ENCODE measurements at regions of chr21 and their contacts with region 1.

Region 1: GRCh38 chr21:37220981-37221664 is 46.0 kb downstream of the VPS26C start:
- DNase-seq: peak; percentile 98
- ATAC-seq: peak; percentile 84
- H3K4me3 Mint-ChIP-seq: peak overlapping the region; percentile 82
- H3K27ac Mint-ChIP-seq: peak overlapping the region; percentile 97
- H3K4me1 Mint-ChIP-seq: peaks cover 47% of the 10 kb centered on the region
- H3K27me3 Mint-ChIP-seq: no peaks in the 10 kb centered on the region

Region 2: GRCh38 chr21:37159053-37159776 is 61.9 kb before region 1 on chr21:
- CTCF ChIA-PET with region 1: no interaction called
- POLR2A ChIA-PET with region 1: no interaction called
- intact Hi-C with region 1: loop called in 1 of 2 experiments (anchors 2 kb)
- DNase-seq: peak; percentile 73
- ATAC-seq: peak; percentile 96
- H3K4me3 Mint-ChIP-seq: peak overlapping the region; percentile 0
- H3K27ac Mint-ChIP-seq: peak overlapping the region; percentile 88
- H3K4me1 Mint-ChIP-seq: peaks cover 13% of the 10 kb centered on the region
- H3K27me3 Mint-ChIP-seq: no peaks in the 10 kb centered on the region

Region 3: DNA sequence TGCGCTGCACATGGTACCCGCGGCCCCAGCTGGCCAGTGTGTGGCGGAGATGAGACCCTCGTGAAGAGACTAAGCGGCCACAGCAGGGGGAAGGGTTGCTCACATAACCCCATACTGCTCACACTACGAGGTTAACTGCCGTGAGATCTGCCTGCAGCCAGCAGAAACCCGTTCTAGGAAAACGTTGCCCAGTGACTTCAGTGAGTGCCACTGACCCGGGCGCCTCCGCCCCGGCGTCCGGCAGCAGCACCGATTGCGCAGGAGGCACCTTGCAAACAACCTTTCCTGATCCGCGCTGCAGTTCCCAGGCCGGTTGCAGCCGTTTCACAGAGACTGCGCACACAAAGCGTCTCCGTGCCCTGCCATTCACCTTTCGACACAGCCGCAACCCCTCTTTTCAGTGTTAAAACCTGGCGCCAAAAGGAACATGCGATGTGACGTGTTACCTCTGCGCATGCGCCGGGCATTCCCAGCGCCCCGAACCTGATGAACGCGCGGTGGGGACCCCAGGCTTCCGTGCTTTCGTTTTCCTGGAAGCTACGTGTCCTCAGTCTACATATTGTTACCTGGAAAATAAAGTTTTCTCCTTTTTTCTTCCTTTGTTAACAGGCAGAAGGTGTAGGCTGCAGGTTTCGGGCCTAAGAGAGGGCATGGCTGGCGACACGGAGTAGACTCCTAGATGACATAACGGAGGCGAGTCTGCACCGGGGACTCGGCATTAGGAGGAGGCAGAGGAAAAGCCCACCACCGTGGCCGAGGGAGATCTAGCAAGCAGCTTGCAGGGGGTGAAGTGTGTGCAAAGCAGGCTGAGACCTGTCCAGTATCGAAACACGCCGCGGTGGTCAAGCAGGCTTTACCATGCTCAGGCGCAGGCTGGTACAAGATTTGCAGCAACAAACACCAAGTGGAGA is 37.1 kb after region 1 on chr21:
- CTCF ChIA-PET with region 1: no interaction called
- POLR2A ChIA-PET with region 1: interaction called, 5 read pairs
- intact Hi-C with region 1: loop called (anchors 2 kb)
- DNase-seq: peak; percentile 92
- ATAC-seq: peak; percentile 87
- H3K4me3 Mint-ChIP-seq: peak overlapping the region; percentile 79
- H3K27ac Mint-ChIP-seq: peak overlapping the region; percentile 93
- H3K4me1 Mint-ChIP-seq: peaks cover 31% of the 10 kb centered on the region
- H3K27me3 Mint-ChIP-seq: no peaks in the 10 kb centered on the region

Region 4: DNA sequence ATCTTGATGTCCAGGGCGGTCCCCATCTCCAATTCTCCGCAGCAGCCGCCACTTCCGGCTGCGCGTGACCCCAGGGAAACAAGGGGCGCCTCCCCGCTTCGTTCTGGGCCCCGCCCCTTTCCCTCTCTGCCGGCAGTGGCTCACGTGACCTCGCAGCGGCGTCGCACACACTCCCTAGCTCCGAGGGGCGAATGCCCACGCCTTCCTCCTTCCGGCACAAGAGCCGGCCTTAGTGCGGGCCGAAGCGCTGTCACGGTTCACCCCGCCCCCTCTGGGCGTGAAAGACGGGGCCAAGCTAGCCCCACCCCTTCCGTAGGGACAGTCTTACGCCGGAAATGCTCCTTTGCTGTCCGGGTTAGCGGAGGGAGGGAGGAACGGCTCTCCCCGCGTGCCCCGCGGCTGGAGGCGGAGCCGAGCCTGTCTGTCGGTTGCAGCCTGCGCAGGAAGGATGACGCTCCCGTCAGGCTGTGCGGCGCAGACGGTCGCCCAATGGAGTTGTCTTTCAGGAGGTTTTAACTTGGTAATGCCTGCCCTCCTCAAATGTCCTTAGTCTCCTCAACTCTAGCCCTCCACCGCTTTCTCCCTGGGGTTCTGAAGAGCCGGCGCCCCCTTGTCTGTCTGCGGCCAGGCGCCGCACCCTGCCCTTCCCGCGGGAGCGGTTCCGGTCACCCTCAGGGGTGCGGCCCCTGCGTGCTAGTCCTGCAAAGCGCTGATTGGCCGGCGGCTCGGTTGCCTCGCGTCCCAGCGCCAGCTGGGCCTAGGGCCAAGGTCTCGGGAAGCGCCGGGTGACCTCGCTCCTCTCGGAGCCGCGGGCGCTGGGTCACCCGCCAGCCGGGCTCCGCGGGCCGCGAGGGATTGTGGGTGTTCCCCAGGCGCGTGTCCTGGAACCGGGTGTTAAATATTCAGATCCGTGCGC is 46.4 kb after region 1 on chr21 and contains the start of gene VPS26C:
- CTCF ChIA-PET with region 1: interaction called, 3 read pairs
- POLR2A ChIA-PET with region 1: no interaction called
- intact Hi-C with region 1: loop called (anchors 1 kb)
- DNase-seq: peak; percentile 99
- ATAC-seq: peak; percentile 92
- H3K4me3 Mint-ChIP-seq: peak within 1 kb of the TSS; percentile 84
- H3K27ac Mint-ChIP-seq: peak within 1 kb of the TSS; percentile 99
- H3K4me1 Mint-ChIP-seq: peaks cover 28% of the 10 kb centered on the region
- H3K27me3 Mint-ChIP-seq: no peaks in the 10 kb centered on the region
- total RNA-seq, gene VPS26C: 54.8 to 61.7 TPM